Activated CD4-positive, alpha-beta memory T cell treated with anti-CD3 and anti-CD28 coated beads for 36 hours (primary cell): ENCODE measurements at regions of chr3 and their contacts with region 1.

Region 1: DNA sequence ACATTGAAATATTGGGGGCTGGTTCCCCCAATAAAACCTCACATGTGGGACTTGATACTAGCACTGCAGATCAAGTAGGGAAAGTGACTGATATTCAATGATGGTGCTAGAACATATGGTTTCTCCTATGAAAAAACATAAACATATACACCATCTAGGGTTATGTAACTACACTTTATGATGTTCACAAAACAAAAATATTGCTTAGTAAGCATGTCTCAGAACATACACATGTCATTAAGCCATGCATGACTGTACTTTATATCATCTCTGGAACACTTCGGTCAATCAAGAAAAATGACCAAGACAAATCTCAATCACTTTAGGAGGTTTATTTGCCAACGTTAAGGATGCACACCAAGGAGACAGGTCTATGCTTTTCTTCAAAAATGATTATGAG is 57.4 kb downstream of the ZNF717 start:
- DNase-seq: no peak
- H3K4me3 Mint-ChIP-seq: no peak overlapping the region
- H3K27ac Mint-ChIP-seq: no peak overlapping the region
- H3K4me1 Mint-ChIP-seq: no peaks in the 10 kb centered on the region
- H3K27me3 Mint-ChIP-seq: no peaks in the 10 kb centered on the region

Region 2: GRCh38 chr3:75631541-75631940 is 96.4 kb before region 1 on chr3:
- CTCF ChIA-PET with region 1: no interaction called
- POLR2A ChIA-PET with region 1: no interaction called
- intact Hi-C with region 1: no loop called
- DNase-seq: no peak
- H3K4me3 Mint-ChIP-seq: no peak overlapping the region
- H3K27ac Mint-ChIP-seq: no peak overlapping the region
- H3K4me1 Mint-ChIP-seq: no peaks in the 10 kb centered on the region
- H3K27me3 Mint-ChIP-seq: no peaks in the 10 kb centered on the region

Region 3: GRCh38 chr3:75894234-75894633 is 166.2 kb after region 1 on chr3:
- CTCF ChIA-PET with region 1: no interaction called
- POLR2A ChIA-PET with region 1: no interaction called
- intact Hi-C with region 1: no loop called
- DNase-seq: no peak
- H3K4me3 Mint-ChIP-seq: no peak overlapping the region
- H3K27ac Mint-ChIP-seq: no peak overlapping the region
- H3K4me1 Mint-ChIP-seq: no peaks in the 10 kb centered on the region
- H3K27me3 Mint-ChIP-seq: no peaks in the 10 kb centered on the region

Region 4: GRCh38 chr3:75913800-75914350 is 185.9 kb after region 1 on chr3:
- CTCF ChIA-PET with region 1: no interaction called
- POLR2A ChIA-PET with region 1: no interaction called
- intact Hi-C with region 1: no loop called
- DNase-seq: no peak
- H3K4me3 Mint-ChIP-seq: no peak overlapping the region
- H3K27ac Mint-ChIP-seq: no peak overlapping the region
- H3K4me1 Mint-ChIP-seq: no peaks in the 10 kb centered on the region
- H3K27me3 Mint-ChIP-seq: no peaks in the 10 kb centered on the region

Region 5: DNA sequence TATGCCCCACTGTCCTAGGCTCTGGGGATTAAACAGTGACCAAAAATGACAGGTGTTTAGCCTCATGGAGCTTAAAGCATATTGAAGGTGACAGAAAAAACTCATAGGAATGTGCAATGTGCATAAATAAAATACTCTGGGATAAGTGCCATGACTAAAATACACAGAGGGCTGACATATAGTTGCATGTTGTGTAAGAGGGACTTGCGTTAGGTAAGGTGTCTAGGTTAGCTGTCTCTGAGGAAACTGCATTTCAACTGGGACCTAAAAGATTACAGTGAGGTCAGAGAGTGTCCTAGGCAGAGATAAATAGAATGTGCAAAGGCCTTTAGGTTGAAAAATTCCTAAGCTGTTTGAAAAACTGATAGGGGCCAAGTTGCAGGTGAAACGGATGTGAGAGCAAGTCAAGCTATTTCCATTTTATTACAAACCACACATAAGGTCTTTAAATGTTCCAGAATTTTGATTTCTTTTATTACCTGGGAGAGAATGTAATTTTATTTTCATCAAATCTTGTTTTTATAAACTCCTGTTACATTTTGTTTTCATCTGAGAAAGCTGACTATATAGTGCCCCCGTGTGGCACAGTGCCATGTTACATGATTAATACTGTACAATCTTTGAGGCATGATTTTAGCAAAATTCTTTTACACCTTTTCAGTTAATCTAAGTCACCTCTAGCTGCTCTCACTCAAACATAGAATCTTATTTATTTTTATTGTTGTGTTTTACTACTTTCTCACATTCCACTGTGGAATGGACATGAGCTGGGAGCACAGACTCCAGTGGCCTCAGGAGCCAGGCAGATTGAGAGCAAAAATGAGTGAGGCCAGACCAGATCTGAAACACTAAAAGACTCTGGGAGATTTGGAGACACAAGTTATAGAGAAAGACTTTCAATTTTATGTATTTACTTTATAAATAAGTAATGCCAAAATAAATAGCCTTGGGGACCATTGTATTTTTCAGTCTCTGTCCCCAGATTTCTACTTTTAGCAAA is 316.9 kb after region 1 on chr3:
- CTCF ChIA-PET with region 1: interaction called, 3 read pairs
- POLR2A ChIA-PET with region 1: no interaction called
- intact Hi-C with region 1: loop called (anchors 5 kb)
- DNase-seq: peak; percentile 15
- H3K4me3 Mint-ChIP-seq: no peak overlapping the region
- H3K27ac Mint-ChIP-seq: no peak overlapping the region
- H3K4me1 Mint-ChIP-seq: no peaks in the 10 kb centered on the region
- H3K27me3 Mint-ChIP-seq: no peaks in the 10 kb centered on the region